Pancreas (tissue), 10 donors: ENCODE measurements at regions of chr1 and their contacts with region 1.

Region 1: DNA sequence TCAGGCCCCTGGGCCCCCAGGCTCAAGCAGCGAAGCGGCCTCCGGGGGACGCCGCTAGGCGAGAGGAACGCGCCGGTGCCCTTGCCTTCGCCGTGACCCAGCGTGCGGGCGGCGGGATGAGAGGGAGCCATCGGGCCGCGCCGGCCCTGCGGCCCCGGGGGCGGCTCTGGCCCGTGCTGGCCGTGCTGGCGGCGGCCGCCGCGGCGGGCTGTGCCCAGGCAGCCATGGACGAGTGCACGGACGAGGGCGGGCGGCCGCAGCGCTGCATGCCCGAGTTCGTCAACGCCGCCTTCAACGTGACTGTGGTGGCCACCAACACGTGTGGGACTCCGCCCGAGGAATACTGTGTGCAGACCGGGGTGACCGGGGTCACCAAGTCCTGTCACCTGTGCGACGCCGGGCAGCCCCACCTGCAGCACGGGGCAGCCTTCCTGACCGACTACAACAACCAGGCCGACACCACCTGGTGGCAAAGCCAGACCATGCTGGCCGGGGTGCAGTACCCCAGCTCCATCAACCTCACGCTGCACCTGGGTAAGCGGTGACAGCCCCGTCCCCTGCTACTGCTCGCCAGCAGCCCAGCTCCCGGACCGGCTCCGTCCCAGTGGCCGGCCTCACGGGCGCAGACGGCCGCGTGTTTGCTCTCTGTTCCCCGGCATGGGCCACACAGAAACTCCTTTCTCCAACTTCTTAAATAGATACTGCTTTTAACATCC is 539 bp downstream of the LAMC1 start:
- DNase-seq: peak; percentile 77 to 94 (median 84)
- ATAC-seq: peak; percentile 66 to 81 (median 79)
- H3K4me3 ChIP-seq: peak overlapping the region; percentile 64 to 91 (median 83)
- H3K27ac ChIP-seq: peak overlapping the region; percentile 92 to 99 (median 96)
- H3K4me1 ChIP-seq: peaks cover 5 to 33% (median 6%) of the 10 kb centered on the region in 3 donors
- H3K27me3 ChIP-seq: no peaks in the 10 kb centered on the region
- CTCF ChIP-seq: peak; percentile 31 to 55 (median 39)

Region 2: GRCh38 chr1:182939413-182939812 is 84.3 kb before region 1 on chr1:
- intact Hi-C with region 1: no loop called
- DNase-seq: no peak
- ATAC-seq: no peak
- H3K4me3 ChIP-seq: no peak overlapping the region
- H3K27ac ChIP-seq: no peak overlapping the region
- H3K4me1 ChIP-seq: no peaks in the 10 kb centered on the region
- H3K27me3 ChIP-seq: peaks cover 0 to 7% (median 0%) of the 10 kb centered on the region in 4 donors
- CTCF ChIP-seq: no peak

Region 3: DNA sequence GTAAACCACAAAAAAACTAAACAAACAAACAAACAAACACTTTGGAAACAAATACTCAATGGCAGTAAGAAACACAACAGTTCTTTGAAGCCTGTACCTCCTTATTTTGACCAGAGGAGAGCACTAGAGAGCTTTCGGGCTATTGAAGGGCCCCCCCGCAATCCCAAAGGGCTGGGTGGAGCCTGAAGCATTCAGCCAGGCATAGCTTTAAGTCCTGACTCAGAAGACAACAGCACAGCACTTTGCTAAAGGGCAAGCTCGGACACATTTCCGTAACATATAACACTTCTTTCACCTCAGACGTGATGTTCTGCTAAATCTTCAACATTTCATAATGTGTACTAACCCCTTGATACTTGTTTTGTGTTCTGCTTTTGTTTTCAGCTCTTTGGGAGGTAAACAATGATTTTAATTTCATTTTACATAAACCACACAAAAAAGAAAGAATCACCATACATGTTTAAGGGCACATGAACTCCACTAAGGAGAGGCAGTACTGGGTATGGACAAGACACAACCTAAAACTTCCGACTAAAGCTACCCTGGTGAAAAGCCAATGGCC is 61.1 kb before region 1 on chr1:
- intact Hi-C with region 1: loop called in 1 of 3 experiments (anchors 2 kb)
- DNase-seq: peak; percentile 64 to 80 (median 68)
- ATAC-seq: peak; percentile 100
- H3K4me3 ChIP-seq: no peak overlapping the region
- H3K27ac ChIP-seq: peak overlapping the region in 2 of 4 donors; percentile 11 to 30
- H3K4me1 ChIP-seq: no peaks in the 10 kb centered on the region
- H3K27me3 ChIP-seq: no peaks in the 10 kb centered on the region
- CTCF ChIP-seq: peak; percentile 60 to 80 (median 79)

Region 4: DNA sequence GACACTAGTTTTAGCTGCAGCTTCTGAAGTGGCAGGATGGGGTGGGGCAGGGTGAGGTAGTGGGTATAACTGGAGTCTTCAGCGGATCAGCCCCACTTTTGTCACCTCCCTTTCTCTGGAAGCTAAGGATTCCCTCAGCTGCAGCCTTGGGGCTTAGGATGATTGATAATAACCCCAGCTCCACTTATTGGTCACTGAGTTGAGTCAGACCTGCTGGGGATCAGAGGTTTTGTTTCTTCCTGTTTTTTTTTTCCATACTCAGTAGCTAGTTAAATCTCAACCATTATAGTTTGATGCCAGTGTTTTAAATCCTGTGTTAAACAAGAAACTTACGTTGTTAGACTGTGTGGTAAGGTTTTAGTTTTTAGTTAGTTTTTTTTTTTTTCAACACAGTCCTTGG is 56.6 kb after region 1 on chr1:
- intact Hi-C with region 1: no loop called
- DNase-seq: no peak
- ATAC-seq: peak in 1 of 4 donors; percentile 81
- H3K4me3 ChIP-seq: no peak overlapping the region
- H3K27ac ChIP-seq: peak overlapping the region in 1 of 4 donors; percentile 32
- H3K4me1 ChIP-seq: no peaks in the 10 kb centered on the region
- H3K27me3 ChIP-seq: no peaks in the 10 kb centered on the region
- CTCF ChIP-seq: no peak